AG04449 (cell line): ENCODE measurements at regions of chr12 and their contacts with region 1.

Region 1: DNA sequence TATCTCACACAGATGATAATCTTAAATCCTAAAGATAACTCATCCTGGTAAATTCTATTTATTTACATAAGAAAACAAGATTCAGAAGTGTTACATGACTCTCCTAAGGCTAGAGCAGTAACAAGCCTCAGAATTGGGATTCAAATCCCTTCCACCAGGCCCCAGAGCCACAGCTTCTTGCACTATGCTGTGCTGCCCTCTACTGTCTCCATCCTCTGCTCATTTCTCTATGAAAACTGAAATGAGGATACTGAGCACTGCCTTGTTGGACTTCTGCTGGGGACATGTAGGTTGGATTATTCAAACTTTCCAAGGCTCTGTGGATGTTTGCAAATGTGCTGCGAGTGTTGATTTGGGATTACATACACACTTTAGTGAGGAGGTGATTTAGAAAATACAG is 23.5 kb upstream of the C12orf50 start:
- DNase-seq: no peak
- H3K4me3 ChIP-seq: no peak overlapping the region
- CTCF ChIP-seq: peak; percentile 59

Region 2: GRCh38 chr12:88037770-88038169 is 14.9 kb before region 1 on chr12:
- CTCF ChIA-PET with region 1: interaction called, 11 read pairs
- POLR2A ChIA-PET with region 1: no interaction called
- DNase-seq: no peak
- H3K4me3 ChIP-seq: no peak overlapping the region
- CTCF ChIP-seq: no peak

Region 3: DNA sequence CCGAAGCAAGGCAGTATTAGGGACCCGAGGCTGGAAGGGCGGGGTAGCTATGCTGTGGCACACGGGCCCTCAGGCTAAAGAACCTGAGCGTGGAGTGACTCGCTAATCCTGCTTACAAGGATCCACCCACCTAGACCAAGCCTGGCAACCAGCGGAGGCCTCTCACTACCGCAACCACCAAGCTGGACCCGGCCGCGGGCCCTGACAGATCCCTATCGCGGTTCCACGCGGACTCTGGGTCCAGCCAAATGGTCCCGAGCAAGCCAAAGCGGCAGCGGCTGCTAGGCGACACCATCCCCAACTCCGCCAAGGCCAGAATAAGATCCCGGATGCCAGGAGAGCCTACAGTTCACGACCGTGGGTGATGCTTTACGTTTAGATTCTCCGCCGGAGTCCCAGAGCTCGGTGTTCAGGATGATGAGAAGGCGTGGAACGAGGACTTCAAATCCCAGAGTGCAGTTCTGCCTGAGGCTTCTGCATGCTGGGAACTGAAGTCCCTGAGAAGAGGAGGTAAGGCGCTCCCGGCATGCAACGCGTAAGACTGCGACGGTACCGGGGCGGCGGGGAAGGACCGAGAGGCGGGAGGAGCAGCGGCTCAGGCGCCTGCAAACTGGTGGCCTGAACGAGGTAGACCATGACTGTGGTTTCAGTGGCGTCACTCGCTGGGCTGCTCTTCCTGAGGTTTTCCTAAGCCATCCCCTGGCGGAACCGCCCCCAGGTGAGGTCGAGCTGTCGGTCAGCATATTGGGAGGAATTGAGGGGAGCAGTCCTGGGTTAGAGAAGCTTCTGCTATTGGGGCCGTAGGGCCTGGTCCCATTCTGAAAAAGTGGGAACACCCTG is 89.3 kb after region 1 on chr12 and contains the starts of genes CEP290 and TMTC3:
- CTCF ChIA-PET with region 1: no interaction called
- POLR2A ChIA-PET with region 1: no interaction called
- DNase-seq: peak; percentile 97
- H3K4me3 ChIP-seq: peak within 1 kb of the TSS; percentile 96
- CTCF ChIP-seq: no peak